CD4-positive, alpha-beta memory T cell (primary cell): ENCODE measurements at regions of chr3 and their contacts with region 1.

Region 1: DNA sequence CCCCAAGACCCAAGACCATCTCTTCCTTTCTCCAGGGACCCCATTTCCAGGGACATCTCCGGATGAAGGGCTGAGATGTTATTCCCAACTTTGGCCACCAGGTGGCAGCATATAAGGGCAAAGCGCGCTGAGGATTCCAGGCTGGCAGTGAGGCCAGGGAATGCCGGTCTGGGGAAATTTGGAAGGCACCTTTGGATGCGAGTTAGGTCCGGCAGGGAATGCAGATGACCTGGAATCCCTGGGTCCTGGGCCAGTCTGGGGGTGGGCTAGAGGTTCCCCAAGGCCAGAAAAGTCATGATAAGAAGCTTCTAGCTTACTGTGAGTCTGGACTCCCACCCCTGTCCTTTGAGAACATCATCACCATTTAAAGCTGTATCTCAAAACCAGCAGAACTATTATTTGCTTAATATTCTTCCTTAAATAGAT is 1.6 kb upstream of the CHST13 start:
- DNase-seq: peak in 4 of 5 donors; percentile 24 to 43 (median 30)
- H3K4me3 ChIP-seq: no peak overlapping the region
- H3K4me3 Mint-ChIP-seq: no peak overlapping the region
- H3K27ac ChIP-seq: no peak overlapping the region
- H3K27ac Mint-ChIP-seq: no peak overlapping the region
- H3K4me1 ChIP-seq: no peaks in the 10 kb centered on the region
- H3K4me1 Mint-ChIP-seq: no peaks in the 10 kb centered on the region
- H3K27me3 ChIP-seq: no peaks in the 10 kb centered on the region
- H3K27me3 Mint-ChIP-seq: peaks cover 13 to 14% of the 10 kb centered on the region in 2 donors

Region 2: GRCh38 chr3:126509597-126510307 is 12.6 kb before region 1 on chr3:
- CTCF ChIA-PET with region 1: interaction called, 14 read pairs
- POLR2A ChIA-PET with region 1: no interaction called
- intact Hi-C with region 1: no loop called
- DNase-seq: no peak
- H3K4me3 ChIP-seq: no peak overlapping the region
- H3K4me3 Mint-ChIP-seq: no peak overlapping the region
- H3K27ac ChIP-seq: no peak overlapping the region
- H3K27ac Mint-ChIP-seq: no peak overlapping the region
- H3K4me1 ChIP-seq: no peaks in the 10 kb centered on the region
- H3K4me1 Mint-ChIP-seq: no peaks in the 10 kb centered on the region
- H3K27me3 ChIP-seq: no peaks in the 10 kb centered on the region
- H3K27me3 Mint-ChIP-seq: peaks cover 4% of the 10 kb centered on the region in 2 donors

Region 3: GRCh38 chr3:126544596-126545281 is 22.4 kb after region 1 on chr3:
- CTCF ChIA-PET with region 1: no interaction called
- POLR2A ChIA-PET with region 1: no interaction called
- intact Hi-C with region 1: no loop called
- DNase-seq: peak in 1 of 5 donors; percentile 15
- H3K4me3 ChIP-seq: no peak overlapping the region
- H3K4me3 Mint-ChIP-seq: no peak overlapping the region
- H3K27ac ChIP-seq: no peak overlapping the region
- H3K27ac Mint-ChIP-seq: no peak overlapping the region
- H3K4me1 ChIP-seq: no peaks in the 10 kb centered on the region
- H3K4me1 Mint-ChIP-seq: peaks cover 0 to 2% (median 0%) of the 10 kb centered on the region in 4 donors
- H3K27me3 ChIP-seq: no peaks in the 10 kb centered on the region
- H3K27me3 Mint-ChIP-seq: peaks cover 0 to 6% of the 10 kb centered on the region in 2 donors

Region 4: GRCh38 chr3:127455541-127456450 is 933.4 kb after region 1 on chr3:
- CTCF ChIA-PET with region 1: interaction called, 10 read pairs
- POLR2A ChIA-PET with region 1: no interaction called
- intact Hi-C with region 1: no loop called
- DNase-seq: peak in 4 of 5 donors; percentile 19 to 37 (median 26)
- H3K4me3 ChIP-seq: no peak overlapping the region
- H3K4me3 Mint-ChIP-seq: peak overlapping the region in 5 of 8 donors; percentile 15 to 64 (median 51)
- H3K27ac ChIP-seq: no peak overlapping the region
- H3K27ac Mint-ChIP-seq: no peak overlapping the region
- H3K4me1 ChIP-seq: no peaks in the 10 kb centered on the region
- H3K4me1 Mint-ChIP-seq: peaks cover 2 to 18% (median 9%) of the 10 kb centered on the region in 4 donors
- H3K27me3 ChIP-seq: peaks cover 18% of the 10 kb centered on the region
- H3K27me3 Mint-ChIP-seq: peaks cover 41 to 44% of the 10 kb centered on the region in 2 donors